ENCODE measurements at regions of chr20 and their contacts with region 1.

Region 1: GRCh38 chr20:63009045-63009961 is 2.5 kb upstream of the BHLHE23 start:
- DNase-seq: peak; percentile 75
- H3K4me3 ChIP-seq: no peak overlapping the region
- H3K27ac ChIP-seq: no peak overlapping the region
- H3K4me1 ChIP-seq: peaks cover 4% of the 10 kb centered on the region
- CTCF ChIP-seq: peak; percentile 94

Region 2: GRCh38 chr20:62822788-62823651 is 186.3 kb before region 1 on chr20:
- CTCF ChIA-PET with region 1: no interaction called
- POLR2A ChIA-PET with region 1: no interaction called
- intact Hi-C with region 1: loop called (anchors 1 kb)
- DNase-seq: peak; percentile 87
- H3K4me3 ChIP-seq: no peak overlapping the region
- H3K27ac ChIP-seq: no peak overlapping the region
- H3K4me1 ChIP-seq: peaks cover 7% of the 10 kb centered on the region
- CTCF ChIP-seq: peak; percentile 88

Region 3: GRCh38 chr20:62953839-62954703 is 55.2 kb before region 1 on chr20:
- CTCF ChIA-PET with region 1: no interaction called
- POLR2A ChIA-PET with region 1: no interaction called
- intact Hi-C with region 1: loop called (anchors 10 kb)
- DNase-seq: peak; percentile 96
- H3K4me3 ChIP-seq: peak overlapping the region; percentile 44
- H3K27ac ChIP-seq: peak overlapping the region; percentile 89
- H3K4me1 ChIP-seq: peaks cover 24% of the 10 kb centered on the region
- CTCF ChIP-seq: no peak

Region 4: GRCh38 chr20:62972270-62973032 is 36.9 kb before region 1 on chr20:
- CTCF ChIA-PET with region 1: no interaction called
- POLR2A ChIA-PET with region 1: no interaction called
- intact Hi-C with region 1: loop called (anchors 1 kb)
- DNase-seq: peak; percentile 82
- H3K4me3 ChIP-seq: no peak overlapping the region
- H3K27ac ChIP-seq: no peak overlapping the region
- H3K4me1 ChIP-seq: peaks cover 4% of the 10 kb centered on the region
- CTCF ChIP-seq: peak; percentile 84

Region 5: GRCh38 chr20:63025534-63026331 is 16.4 kb after region 1 on chr20:
- CTCF ChIA-PET with region 1: no interaction called
- POLR2A ChIA-PET with region 1: no interaction called
- intact Hi-C with region 1: no loop called
- DNase-seq: no peak
- H3K4me3 ChIP-seq: no peak overlapping the region
- H3K27ac ChIP-seq: no peak overlapping the region
- H3K4me1 ChIP-seq: no peaks in the 10 kb centered on the region
- CTCF ChIP-seq: no peak

Measured in OCI-LY7 (cell line).